BJ (cell line): ENCODE measurements at regions of chr18 and their contacts with region 1.

Region 1: GRCh38 chr18:77000527-77000926 is 132.1 kb downstream of the MBP start:
- DNase-seq: no peak
- H3K4me3 ChIP-seq: peak overlapping the region; percentile 16; the same call in 1 of the 2 replicates
- H3K27me3 ChIP-seq: peaks cover 2% of the 10 kb centered on the region; the same call in 1 of the 2 replicates
- CTCF ChIP-seq: peak; percentile 99

Region 2: DNA sequence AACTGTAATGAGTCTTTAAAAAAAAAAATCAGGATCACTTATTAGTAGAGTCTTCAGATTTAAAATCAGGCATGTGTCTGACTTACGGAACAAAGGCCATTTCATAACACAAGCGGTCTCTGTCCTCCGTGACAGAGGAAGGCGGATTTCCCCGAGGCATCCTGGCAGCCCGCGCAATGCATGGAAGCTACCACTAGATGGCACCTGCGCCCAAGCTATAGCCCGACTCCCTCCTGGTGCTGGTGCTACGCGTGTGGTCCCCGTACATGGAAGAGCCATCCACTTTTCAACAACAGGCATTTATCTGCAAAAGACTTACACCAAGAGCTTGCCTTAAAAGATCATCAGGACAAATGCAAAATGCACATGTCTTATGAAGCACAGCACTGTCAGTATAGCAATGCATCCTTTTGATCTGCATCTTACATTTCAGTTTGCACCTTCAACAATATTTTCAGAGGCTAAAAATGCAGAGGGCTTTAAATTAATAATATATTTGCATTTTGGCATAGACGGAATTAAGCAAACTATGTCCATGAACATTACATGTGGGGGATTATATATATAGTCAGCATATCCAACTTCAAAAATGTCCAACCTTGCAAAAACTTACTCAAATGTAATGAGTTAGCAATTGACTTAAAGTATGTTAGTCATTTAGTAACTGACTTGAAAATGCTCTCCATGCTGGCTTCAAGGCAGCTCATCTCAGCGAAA is 601.5 kb before region 1 on chr18:
- CTCF ChIA-PET with region 1: no interaction called
- POLR2A ChIA-PET with region 1: no interaction called
- DNase-seq: no peak
- H3K4me3 ChIP-seq: no peak overlapping the region
- H3K27me3 ChIP-seq: no peaks in the 10 kb centered on the region
- CTCF ChIP-seq: peak; percentile 99

Region 3: GRCh38 chr18:76982841-76983587 is 17.5 kb before region 1 on chr18:
- CTCF ChIA-PET with region 1: interaction called, 13 read pairs
- POLR2A ChIA-PET with region 1: no interaction called
- DNase-seq: peak; percentile 3
- H3K4me3 ChIP-seq: no peak overlapping the region
- H3K27me3 ChIP-seq: peaks cover 2% of the 10 kb centered on the region; the same call in 1 of the 2 replicates
- CTCF ChIP-seq: peak; percentile 96

Region 4: GRCh38 chr18:77054606-77055428 is 54.3 kb after region 1 on chr18:
- CTCF ChIA-PET with region 1: interaction called, 35 read pairs
- POLR2A ChIA-PET with region 1: no interaction called
- DNase-seq: peak; percentile 31
- H3K4me3 ChIP-seq: no peak overlapping the region
- H3K27me3 ChIP-seq: no peaks in the 10 kb centered on the region; the same call in 1 of the 2 replicates
- CTCF ChIP-seq: peak; percentile 90

Region 5: DNA sequence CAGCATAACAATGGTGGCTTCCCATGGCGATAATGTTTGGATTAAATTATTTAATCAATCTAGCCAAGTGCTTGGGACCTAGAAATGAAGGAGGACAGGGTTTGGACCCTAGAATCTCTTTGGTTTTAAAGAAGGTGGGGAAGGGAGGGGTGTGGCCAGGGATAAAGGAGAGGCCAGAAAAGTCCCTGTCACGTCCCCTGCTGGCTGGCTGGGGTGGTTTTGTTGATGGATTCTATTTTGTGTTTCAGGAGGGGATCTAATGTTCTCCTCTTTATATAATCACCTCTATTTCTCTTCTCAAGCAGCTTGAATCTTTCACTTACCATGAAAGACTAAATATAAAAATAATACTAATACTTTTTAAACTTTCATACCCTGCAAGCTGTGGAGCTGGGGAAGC is 196.5 kb after region 1 on chr18:
- CTCF ChIA-PET with region 1: interaction called, 21 read pairs
- POLR2A ChIA-PET with region 1: no interaction called
- DNase-seq: no peak
- H3K4me3 ChIP-seq: no peak overlapping the region
- H3K27me3 ChIP-seq: peaks cover 2% of the 10 kb centered on the region; the same call in 1 of the 2 replicates
- CTCF ChIP-seq: peak; percentile 23; the same call in 1 of the 2 replicates

Region 6: DNA sequence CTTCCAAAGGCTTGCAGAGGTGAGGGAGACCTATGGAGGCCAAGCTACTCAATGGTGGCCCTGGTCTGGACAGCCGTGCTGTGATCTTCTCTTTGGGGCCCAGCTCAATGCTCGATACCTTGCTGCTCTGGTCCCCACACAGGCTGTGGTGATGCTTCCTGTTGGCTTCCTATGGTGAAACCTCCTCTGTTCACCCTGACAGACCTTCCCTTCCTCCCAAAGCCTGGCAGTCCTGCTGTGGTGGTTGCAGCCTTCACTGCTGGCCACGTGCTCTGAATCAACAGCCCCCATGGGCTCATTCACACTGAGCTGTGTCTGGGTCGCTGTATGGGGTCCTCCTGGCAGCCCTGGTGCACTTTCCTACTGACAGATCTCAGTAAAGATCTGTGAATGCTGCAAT is 218.1 kb after region 1 on chr18:
- CTCF ChIA-PET with region 1: interaction called, 215 read pairs
- POLR2A ChIA-PET with region 1: no interaction called
- DNase-seq: no peak
- H3K4me3 ChIP-seq: no peak overlapping the region
- H3K27me3 ChIP-seq: no peaks in the 10 kb centered on the region
- CTCF ChIP-seq: no peak